GM10248 (cell line): ENCODE measurements at regions of chr10 and their contacts with region 1.

Region 1: DNA sequence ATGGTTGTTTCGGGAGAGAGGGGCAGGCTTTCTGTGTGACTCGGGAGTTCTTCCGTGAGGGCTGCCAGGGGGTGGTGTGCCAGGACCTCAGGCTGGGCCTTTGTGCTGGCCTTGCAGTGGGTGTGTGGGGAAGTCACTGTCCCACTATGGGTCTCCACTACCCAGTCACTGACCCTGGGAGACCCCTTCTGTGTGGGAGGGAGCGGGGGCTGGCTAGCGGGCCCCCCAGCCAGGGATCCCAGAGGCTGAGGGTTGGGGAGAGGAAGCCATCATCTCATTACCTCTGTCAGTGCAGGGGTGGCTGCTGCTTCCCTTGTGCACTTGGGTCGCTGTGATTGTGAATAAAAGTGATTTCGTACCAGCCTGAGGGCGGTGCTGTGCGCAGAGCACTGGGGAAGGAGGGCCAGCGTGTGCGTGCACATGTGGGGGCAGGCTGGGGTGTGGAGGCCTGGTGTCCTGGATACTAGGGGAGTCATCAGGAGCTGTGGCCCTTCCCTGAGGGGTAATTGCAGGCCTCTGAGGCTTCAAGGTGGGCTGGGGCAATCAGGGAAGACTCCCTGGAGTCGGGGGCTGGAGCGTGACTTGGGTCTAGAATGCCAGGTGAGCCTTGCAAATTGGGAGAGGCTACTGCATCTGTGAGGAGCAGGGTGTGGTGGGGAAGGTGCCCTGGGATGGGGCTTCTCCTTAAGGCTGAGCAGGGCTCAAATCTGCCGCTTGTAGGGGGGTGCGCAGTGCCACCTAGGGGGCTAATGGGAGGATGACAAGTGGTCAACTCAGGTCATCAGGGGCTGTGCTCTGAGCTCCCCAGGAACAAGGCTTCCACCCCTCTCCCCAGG is 98.9 kb downstream of the NEURL1 start:
- DNase-seq: peak; percentile 86
- CTCF ChIP-seq: peak; percentile 85

Region 2: GRCh38 chr10:103013416-103013815 is 579.0 kb before region 1 on chr10:
- CTCF ChIA-PET with region 1: no interaction called
- POLR2A ChIA-PET with region 1: no interaction called
- DNase-seq: no peak
- CTCF ChIP-seq: no peak

Region 3: DNA sequence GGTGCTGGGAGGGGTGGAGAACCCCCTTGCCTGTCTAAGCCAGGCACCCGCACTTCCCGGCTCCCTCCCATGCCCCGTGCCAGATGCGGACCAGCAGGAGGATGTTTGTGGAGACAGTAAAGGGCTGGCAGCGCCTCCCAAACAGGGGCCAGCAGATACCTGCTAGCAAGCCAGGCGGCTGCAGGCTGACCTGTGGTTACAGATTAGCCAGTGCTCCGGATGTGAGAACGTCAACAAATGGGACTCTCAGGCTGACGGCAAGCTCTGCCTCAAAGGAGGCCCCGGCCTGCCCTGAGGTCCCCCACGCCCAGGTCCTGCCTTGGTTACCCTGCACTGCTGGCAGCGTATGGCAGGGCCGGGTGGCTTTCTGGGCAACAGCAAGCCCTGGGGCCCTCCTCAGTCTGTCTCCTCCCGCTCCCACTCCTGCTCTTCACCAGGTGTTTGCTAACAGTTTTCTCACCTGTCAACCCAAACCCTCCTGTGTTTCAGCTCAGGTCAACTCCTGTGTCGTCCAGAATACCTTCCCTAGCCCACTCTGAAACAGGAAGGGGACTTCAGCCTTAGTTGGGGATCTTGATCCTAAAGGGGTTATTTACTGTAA is 13.5 kb before region 1 on chr10:
- CTCF ChIA-PET with region 1: interaction called, 24 read pairs
- POLR2A ChIA-PET with region 1: no interaction called
- DNase-seq: peak; percentile 73
- CTCF ChIP-seq: no peak